ENCODE measurements at regions of chr3 and their contacts with region 1.

Region 1: DNA sequence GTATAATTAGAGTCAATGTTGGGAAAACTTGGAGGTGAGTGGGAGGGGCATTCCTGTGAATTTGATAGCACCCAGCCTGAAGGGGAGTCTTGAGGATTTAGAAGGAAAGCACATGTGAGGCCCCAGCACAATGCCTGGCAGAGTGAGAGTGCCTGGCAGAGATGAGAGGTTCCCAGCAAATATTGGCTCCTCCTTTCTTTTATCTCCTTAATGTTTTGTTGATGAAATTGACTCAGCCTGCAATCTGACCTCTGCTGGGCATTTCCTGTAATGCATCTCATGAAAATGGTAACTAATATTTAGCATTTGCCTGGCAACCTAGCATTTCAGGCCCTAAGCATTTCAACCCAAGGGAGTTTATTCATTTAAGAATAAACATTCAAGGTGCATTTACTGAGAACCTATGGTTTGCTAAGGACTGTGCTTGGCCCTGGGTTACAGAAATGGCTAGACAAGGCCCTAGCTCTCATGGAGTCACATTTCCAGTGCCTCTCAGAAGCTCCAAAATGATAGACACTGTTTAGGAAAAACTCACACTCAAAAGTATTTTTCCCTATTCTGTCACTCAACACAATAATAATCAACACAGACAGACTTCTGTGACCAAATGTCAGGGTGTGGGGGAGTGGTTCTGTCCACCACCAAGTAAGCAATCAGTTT is 19.0 kb downstream of the PDHB start:
- DNase-seq: peak in 3 of 5 donors; percentile 34 to 76 (median 69)
- H3K4me3 ChIP-seq: no peak overlapping the region
- H3K27ac ChIP-seq: peak overlapping the region in 1 of 2 donors; percentile 23
- H3K4me1 ChIP-seq: peaks cover 0 to 10% (median 0%) of the 10 kb centered on the region in 3 donors
- H3K27me3 ChIP-seq: no peaks in the 10 kb centered on the region
- CTCF ChIP-seq: peak; percentile 90

Region 2: GRCh38 chr3:58332575-58333188 is 82.0 kb before region 1 on chr3 and contains the start of gene PXK:
- intact Hi-C with region 1: loop called (anchors 10 kb)
- DNase-seq: peak; percentile 80 to 93 (median 83)
- H3K4me3 ChIP-seq: peak within 1 kb of the TSS; percentile 69 to 80 (median 74)
- H3K27ac ChIP-seq: peak within 1 kb of the TSS; percentile 53 to 57
- H3K4me1 ChIP-seq: peaks cover 0 to 21% (median 9%) of the 10 kb centered on the region in 3 donors
- H3K27me3 ChIP-seq: no peaks in the 10 kb centered on the region
- CTCF ChIP-seq: peak; percentile 14
- total RNA-seq, gene PXK: 24.8 TPM

Measured in kidney (tissue), 22 donors.